Posterior vena cava (tissue), 2 donors: ENCODE measurements at regions of chr6 and their contacts with region 1.

Region 1: DNA sequence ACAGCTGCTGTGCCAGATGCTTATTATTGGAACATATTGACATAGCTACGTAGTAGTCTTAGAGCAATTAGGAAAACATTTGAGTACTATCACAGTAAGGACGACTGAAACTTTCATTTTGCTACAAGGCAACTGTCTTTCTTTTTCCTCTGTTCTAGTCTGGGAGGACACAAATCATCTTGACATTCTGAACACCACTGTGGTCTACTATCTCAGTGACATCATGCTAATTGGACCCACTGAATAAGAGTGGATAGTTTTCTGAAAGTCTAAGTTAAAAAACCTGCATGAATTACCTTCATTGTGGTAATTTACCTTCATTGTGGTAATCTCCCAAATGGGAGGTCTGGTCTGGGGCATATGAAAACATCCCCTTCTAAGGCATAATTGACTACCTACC is 163.3 kb upstream of the MOCS1 start:
- DNase-seq: no peak

Region 2: DNA sequence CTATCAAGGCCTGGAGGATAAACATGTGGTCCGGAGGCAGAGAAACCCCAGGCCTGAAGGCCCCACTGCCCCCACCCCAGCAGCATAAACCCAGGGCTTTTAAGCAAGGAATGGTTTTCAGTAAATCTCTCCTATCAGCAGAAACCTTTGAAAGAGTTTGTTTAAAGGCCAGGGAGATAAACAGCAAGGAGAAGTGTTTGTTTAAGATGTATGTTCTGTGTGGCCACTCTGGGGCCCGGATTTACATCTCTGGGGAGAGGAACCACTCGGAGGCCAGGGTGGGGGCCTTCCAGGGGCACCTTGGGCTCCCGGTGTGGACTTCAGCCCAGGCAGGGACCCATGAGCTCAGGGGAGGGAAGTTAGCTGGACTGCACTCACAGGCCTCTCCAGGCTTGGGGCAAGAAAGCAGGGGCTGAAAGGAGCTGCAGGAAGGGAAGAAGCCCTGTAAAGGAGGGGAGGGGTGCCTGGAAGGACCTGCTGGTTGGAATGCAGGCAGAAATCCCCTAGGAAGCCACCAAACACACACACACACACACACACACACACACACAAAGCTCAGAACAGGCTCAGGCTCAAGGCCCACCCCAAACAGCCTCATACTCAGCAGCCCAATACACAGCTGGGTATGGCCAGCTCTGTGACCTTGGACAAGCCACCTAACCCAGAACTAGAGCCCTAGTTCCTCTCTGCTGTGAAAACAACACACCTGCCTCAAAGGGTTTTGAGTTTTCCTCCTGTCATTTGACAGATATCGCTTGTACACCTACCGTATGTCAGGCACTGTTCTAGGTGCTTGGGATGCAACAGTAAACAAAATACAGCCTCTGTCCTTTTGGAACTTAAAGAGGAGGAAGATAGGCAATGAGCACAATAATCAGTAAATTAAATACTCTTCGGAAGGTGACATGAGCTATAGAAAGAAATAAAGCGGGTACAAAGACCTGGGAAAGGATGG is 1422.4 kb after region 1 on chr6:
- intact Hi-C with region 1: loop called in 1 of 2 experiments (anchors 5 kb)
- DNase-seq: no peak